Activated CD4-positive, alpha-beta T cell treated with anti-CD3 and anti-CD28 coated beads for 36 hours (primary cell): ENCODE measurements at regions of chr16 and their contacts with region 1.

Region 1: DNA sequence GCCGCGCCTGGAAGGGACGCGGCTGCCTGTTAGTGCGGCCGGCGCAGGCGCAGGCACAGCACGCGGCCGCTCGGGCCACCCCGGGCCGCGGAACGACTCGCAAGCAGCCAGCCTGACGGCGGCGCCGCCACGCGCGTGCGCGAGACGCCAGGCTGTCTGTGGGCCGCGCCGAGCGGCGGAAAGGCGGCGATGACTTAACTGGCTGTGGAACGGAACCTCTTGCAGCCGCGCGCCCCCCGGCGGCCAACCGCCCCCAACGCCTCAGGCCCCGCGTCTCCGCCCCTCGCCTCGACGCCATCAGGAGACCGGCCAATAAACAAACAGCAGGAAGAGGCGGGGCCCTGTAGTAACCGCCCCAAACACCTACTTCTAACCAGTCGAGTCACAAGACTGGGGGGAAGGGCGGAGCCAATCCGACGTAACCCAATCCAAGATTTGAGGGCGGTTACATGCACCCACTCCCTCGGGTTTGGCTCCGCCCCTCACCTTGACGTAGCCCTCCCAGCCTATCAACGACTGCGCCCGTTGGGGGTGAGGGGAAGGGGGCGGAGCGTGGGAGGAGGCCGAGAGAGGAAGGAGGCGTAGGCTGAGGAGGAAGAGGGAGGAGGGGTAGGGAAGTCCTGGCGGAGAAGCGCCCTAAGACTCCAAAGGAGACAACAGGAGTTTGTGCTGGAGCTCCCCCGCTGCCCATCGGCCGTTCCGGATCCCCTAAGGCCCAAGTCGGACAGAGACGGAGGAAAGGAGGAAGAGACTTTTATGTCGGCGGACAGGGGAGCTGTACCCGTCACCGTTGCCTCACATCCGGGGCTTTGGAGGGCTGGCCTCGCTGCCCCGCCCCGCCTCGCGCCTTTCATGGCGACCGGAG is at the start of gene FBRS:
- DNase-seq: peak; percentile 100
- ATAC-seq: peak; percentile 79
- H3K4me3 Mint-ChIP-seq: peak within 1 kb of the TSS; percentile 89
- H3K27ac Mint-ChIP-seq: peak within 1 kb of the TSS; percentile 99
- H3K4me1 Mint-ChIP-seq: peaks cover 41% of the 10 kb centered on the region
- H3K27me3 Mint-ChIP-seq: no peaks in the 10 kb centered on the region
- total RNA-seq, gene FBRS: 84.7 to 111 TPM

Region 2: DNA sequence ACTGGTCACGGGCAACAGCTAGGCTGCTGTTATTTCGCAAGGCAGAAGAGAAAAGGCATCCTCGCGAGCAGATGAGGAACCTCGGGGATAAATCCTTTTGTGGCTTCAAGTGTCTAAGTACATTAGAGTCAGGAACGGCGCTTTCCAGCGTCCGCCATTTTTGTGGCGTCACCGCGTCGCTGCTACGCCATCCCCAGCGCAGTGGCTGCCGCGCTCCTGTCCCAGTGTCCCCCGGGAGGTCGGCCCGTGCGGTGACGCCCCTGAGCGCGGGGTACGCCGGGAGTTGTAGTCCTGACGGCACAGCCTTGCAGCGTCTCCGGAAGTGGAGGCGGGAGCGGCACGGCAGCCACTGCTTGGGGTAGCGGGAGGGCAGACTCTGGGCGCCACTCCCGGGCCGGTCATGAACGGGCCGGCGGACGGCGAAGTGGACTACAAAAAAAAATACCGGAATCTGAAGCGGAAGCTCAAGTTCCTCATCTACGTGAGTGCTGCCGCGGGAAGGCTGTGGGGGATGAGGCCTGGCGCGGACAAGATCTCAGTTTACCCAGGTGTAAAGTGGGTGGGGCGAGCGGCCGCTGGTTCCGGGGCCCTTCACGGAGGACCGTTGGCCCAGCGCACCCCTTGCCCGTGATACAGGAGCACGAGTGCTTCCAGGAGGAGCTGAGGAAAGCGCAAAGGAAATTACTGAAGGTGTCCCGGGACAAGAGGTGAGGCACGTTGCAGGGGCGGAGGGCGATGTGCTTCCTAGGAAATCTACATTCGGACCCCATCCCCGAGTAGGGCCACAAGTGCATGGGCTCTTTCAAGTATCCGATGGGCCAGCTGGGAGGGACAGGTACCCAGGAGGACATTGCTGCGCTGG is 662.0 kb before region 1 on chr16 and contains the start of gene INO80E:
- CTCF ChIA-PET with region 1: no interaction called
- POLR2A ChIA-PET with region 1: no interaction called
- intact Hi-C with region 1: loop called in 1 of 2 experiments (anchors 1 kb)
- DNase-seq: peak; percentile 100
- ATAC-seq: peak; percentile 98
- H3K4me3 Mint-ChIP-seq: peak within 1 kb of the TSS; percentile 96
- H3K27ac Mint-ChIP-seq: peak within 1 kb of the TSS; percentile 98
- H3K4me1 Mint-ChIP-seq: peaks cover 25% of the 10 kb centered on the region
- H3K27me3 Mint-ChIP-seq: no peaks in the 10 kb centered on the region
- total RNA-seq, gene INO80E: 80.1 to 106 TPM

Region 3: GRCh38 chr16:30378236-30379204 is 279.6 kb before region 1 on chr16:
- CTCF ChIA-PET with region 1: no interaction called
- POLR2A ChIA-PET with region 1: interaction called, 4 read pairs
- intact Hi-C with region 1: loop called in 1 of 2 experiments (anchors 1 kb)
- DNase-seq: peak; percentile 100
- ATAC-seq: peak; percentile 87
- H3K4me3 Mint-ChIP-seq: peak overlapping the region; percentile 99
- H3K27ac Mint-ChIP-seq: peak overlapping the region; percentile 99
- H3K4me1 Mint-ChIP-seq: peaks cover 44% of the 10 kb centered on the region
- H3K27me3 Mint-ChIP-seq: no peaks in the 10 kb centered on the region

Region 4: DNA sequence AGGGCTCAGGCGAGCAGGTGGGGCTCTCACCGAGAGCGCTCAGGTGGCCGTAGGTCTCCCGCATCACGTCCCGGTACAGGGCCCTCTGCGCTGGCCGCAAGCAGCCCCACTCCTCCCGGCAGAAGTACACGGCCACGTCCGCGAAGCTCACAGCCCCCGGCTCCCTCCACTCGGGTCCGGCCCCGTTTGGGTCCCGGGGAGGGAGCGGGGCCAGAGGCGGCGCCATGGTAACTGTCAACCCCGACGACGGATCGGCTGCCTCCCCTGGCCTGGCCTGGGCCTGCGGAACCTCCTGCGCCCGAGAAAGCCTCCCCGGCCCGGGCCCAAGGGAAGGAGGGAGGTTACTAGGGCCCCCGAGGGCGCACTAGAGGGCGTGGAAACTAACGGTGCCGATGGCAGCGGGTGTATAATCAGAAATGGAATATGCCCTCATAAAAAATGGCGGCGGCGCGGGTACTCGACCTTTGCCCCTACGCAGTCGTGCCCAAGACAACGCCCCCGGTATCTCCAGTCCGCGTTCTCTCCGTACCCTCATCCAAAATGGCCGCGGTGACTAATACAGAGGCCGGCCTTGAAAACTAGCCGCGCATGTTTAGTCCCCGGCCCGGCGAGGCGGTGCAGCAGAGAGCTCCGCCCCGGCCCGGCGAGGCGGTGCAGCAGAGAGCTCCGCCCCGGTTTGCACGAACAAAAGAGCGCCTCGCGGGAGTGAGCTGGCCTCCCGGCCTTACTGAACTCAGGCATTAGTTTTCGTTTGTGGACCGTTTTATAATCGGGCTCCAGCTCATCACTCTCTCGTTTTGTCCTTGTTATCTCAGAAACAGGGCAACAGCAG is 99.9 kb before region 1 on chr16 and contains the start of gene ZNF764:
- CTCF ChIA-PET with region 1: no interaction called
- POLR2A ChIA-PET with region 1: no interaction called
- intact Hi-C with region 1: loop called in 1 of 2 experiments (anchors 1 kb)
- DNase-seq: peak; percentile 99
- ATAC-seq: peak; percentile 96
- H3K4me3 Mint-ChIP-seq: peak within 1 kb of the TSS; percentile 85
- H3K27ac Mint-ChIP-seq: peak within 1 kb of the TSS; percentile 94
- H3K4me1 Mint-ChIP-seq: peaks cover 44% of the 10 kb centered on the region
- H3K27me3 Mint-ChIP-seq: no peaks in the 10 kb centered on the region
- total RNA-seq, gene ZNF764: 8.0 to 11.2 TPM

Region 5: DNA sequence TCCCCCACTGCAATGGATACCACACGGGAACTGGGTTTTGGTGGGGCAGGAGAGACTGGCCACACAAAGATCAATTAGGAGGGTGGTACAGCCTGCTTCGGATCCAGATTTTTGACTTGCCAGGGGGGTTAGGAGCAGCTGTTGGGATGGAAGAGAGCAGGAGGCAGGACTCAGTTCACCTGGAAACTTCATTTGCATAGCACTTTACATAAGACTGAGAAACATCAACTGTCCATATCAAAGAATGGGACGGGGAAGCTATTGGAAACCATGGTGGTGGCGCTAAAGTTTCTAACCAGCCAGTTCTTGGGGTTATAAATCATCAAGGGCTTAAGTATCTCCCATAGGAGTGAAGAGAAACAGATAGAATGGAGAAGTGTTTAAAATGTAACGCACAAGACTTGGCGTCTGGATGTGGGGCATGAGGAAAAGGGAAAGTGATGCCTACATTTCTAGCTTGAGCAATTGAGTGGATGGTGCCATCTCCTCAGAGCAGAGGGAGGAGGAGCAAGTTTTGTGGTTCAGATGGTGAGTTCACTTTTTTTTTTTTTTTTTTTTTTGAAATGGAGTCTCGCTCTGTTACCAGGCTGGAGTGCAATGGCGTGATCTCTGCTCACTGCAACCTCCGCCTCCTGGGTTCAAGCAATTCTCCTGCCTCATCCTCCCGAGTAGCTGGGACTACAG is 34.4 kb after region 1 on chr16:
- CTCF ChIA-PET with region 1: interaction called, 35 read pairs
- POLR2A ChIA-PET with region 1: interaction called, 10 read pairs
- intact Hi-C with region 1: loop called (anchors 1 kb)
- DNase-seq: no peak
- ATAC-seq: no peak
- H3K4me3 Mint-ChIP-seq: no peak overlapping the region
- H3K27ac Mint-ChIP-seq: no peak overlapping the region
- H3K4me1 Mint-ChIP-seq: peaks cover 15% of the 10 kb centered on the region
- H3K27me3 Mint-ChIP-seq: no peaks in the 10 kb centered on the region

Region 6: DNA sequence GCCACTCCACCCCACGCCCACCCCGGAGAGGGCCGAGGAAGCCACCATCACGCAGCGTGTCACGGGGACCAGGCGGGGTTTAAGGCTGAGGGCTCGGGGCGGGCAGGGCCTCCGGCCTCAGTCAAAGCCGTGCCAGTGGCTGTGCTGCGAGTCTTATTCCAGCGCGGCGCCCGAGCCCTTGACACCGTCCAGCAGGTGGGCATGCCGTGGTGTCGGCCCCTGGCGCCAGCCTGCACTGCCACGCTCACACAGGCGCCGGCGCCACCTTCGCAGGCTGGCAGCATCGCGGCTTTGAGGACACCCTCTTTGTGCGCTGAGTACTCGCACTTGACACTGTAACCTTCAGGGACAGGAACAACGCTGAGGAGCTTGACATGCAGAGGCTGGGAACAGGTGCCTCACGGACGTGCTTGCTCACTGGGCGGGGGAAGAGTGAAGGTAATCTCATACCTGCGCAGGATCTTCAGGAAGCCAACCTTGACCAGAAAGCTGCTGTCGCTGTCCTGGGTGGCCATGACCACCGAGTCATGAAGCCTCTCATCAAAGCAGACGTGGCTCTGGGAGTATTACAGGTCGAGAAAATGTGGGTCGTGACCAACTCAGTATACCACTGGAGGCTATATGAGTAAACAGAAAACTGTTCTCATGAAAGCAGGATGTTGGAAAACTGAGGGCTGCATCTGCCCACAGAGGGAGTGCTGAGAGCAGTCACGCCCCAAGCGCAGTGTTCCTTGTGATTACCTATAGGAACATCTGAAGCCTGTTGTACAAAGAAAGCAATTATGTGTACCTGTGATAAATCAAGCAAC is 163.1 kb after region 1 on chr16:
- CTCF ChIA-PET with region 1: no interaction called
- POLR2A ChIA-PET with region 1: no interaction called
- intact Hi-C with region 1: no loop called
- DNase-seq: no peak
- ATAC-seq: no peak
- H3K4me3 Mint-ChIP-seq: no peak overlapping the region
- H3K27ac Mint-ChIP-seq: no peak overlapping the region
- H3K4me1 Mint-ChIP-seq: no peaks in the 10 kb centered on the region
- H3K27me3 Mint-ChIP-seq: no peaks in the 10 kb centered on the region

Region 7: GRCh38 chr16:30893744-30894539 is 235.8 kb after region 1 on chr16 and contains the start of gene BCL7C:
- CTCF ChIA-PET with region 1: no interaction called
- POLR2A ChIA-PET with region 1: no interaction called
- intact Hi-C with region 1: loop called in 1 of 2 experiments (anchors 1 kb)
- DNase-seq: peak; percentile 92
- ATAC-seq: peak; percentile 74
- H3K4me3 Mint-ChIP-seq: peak within 1 kb of the TSS; percentile 84
- H3K27ac Mint-ChIP-seq: peak within 1 kb of the TSS; percentile 88
- H3K4me1 Mint-ChIP-seq: peaks cover 35% of the 10 kb centered on the region
- H3K27me3 Mint-ChIP-seq: no peaks in the 10 kb centered on the region
- total RNA-seq, gene BCL7C: 19.5 to 20.4 TPM

Region 8: DNA sequence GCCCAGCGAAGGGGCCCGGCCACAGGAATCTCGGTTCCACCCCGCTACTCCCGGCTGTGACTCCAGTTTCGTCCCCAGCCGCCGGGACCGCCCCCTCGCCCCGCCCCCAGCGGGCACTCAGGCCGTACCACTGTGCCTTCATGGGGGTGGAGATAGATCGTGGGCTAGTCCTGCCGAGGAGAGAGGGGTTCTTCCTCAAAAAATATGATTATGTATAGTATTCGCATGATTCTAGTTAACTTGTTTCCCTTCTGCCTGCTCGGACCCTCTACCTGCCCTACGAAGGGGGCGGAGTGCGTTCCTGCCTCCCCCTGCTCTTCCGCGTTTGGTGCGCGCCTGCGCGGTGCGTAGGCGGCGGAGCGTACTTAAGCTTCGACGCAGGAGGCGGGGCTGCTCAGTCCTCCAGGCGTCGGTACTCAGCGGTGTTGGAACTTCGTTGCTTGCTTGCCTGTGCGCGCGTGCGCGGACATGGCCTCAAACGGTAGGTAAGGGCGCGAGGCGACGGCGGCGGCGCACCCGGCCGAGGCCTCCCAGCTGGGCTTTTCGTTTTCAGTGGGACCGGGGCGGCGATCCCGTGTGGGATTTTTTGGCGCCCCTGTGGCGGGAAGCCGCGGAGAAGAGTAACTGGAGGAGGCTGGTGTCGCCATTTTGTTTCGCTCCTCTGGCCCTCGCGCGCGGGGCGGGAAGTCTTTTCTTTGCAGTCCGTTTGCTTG is 521.8 kb after region 1 on chr16 and contains the start of gene FUS:
- CTCF ChIA-PET with region 1: no interaction called
- POLR2A ChIA-PET with region 1: no interaction called
- intact Hi-C with region 1: loop called in 1 of 2 experiments (anchors 1 kb)
- DNase-seq: peak; percentile 94
- ATAC-seq: peak; percentile 56
- H3K4me3 Mint-ChIP-seq: peak within 1 kb of the TSS; percentile 95
- H3K27ac Mint-ChIP-seq: peak within 1 kb of the TSS; percentile 99
- H3K4me1 Mint-ChIP-seq: peaks cover 51% of the 10 kb centered on the region
- H3K27me3 Mint-ChIP-seq: no peaks in the 10 kb centered on the region
- total RNA-seq, gene FUS: 647 to 648 TPM